ENCODE measurements at regions of chr9 and their contacts with region 1.

Region 1: DNA sequence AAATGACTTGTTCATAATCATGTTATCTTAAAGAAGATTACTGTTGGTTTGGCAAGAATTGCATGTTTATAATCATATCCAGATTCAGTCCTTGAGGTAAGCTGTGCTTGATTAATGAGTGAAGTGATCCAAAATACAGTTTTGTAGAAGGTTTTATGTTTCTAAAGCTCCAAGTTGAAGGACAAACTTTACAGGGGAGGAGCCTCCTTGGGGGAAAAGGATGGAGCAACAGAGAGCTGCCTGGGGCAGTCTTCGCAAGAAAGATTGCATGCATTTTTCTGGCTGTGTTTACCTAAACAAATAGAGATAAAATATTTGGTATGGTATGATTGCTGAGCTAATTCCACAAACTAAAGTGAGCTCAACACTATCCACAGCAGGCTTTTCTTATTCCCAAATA is 189.5 kb upstream of the TYRP1 start:
- DNase-seq: no peak
- ATAC-seq: no peak
- H3K4me3 ChIP-seq: no peak overlapping the region
- H3K27ac ChIP-seq: no peak overlapping the region
- H3K4me1 ChIP-seq: no peaks in the 10 kb centered on the region
- H3K27me3 ChIP-seq: no peaks in the 10 kb centered on the region
- CTCF ChIP-seq: no peak

Region 2: DNA sequence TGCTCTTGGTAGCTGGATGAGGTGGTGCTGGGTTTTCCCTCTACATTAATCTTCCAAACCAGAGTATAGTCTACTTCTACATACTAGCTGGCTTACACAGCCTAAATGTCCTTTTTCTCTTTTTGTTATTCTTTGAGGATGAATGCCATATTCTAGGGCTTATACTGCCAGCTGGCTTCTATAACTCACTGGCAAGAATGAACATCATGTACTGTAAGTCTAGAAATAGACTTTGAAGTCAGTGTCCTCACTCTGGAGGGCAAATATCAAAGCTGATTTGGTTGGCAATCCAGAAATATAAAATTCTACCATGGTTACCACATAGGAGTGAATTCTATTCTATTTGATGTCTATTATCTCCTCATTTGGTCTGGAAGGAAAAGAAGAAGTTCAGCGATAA is 62.2 kb before region 1 on chr9:
- intact Hi-C with region 1: loop called in 1 of 10 experiments (anchors 10 kb)
- DNase-seq: no peak
- ATAC-seq: peak in 4 of 8 donors; percentile 65 to 88 (median 78)
- H3K4me3 ChIP-seq: no peak overlapping the region
- H3K27ac ChIP-seq: no peak overlapping the region
- H3K4me1 ChIP-seq: peaks cover 0 to 6% (median 0%) of the 10 kb centered on the region in 9 donors
- H3K27me3 ChIP-seq: no peaks in the 10 kb centered on the region
- CTCF ChIP-seq: no peak

Region 3: DNA sequence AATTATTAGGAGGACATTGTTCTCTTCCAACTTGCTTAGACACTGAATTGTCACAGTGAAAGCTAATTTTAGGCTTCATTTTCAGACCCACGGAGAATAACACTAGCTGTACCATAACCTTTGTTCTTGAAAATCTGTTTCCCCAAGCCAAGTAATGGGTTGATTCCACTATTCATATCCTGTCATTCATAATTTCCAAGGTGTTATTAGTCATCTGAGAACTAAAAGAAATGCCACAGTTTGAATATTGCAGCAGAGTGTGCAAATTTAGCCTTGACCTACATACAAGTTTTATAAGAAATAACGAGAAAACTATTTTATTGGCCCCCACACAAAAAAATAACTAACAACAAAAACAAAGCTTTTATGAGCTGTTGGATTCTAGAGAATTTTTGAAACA is 41.0 kb after region 1 on chr9:
- intact Hi-C with region 1: no loop called
- DNase-seq: no peak
- ATAC-seq: no peak
- H3K4me3 ChIP-seq: no peak overlapping the region
- H3K27ac ChIP-seq: no peak overlapping the region
- H3K4me1 ChIP-seq: no peaks in the 10 kb centered on the region
- H3K27me3 ChIP-seq: no peaks in the 10 kb centered on the region
- CTCF ChIP-seq: no peak

Region 4: DNA sequence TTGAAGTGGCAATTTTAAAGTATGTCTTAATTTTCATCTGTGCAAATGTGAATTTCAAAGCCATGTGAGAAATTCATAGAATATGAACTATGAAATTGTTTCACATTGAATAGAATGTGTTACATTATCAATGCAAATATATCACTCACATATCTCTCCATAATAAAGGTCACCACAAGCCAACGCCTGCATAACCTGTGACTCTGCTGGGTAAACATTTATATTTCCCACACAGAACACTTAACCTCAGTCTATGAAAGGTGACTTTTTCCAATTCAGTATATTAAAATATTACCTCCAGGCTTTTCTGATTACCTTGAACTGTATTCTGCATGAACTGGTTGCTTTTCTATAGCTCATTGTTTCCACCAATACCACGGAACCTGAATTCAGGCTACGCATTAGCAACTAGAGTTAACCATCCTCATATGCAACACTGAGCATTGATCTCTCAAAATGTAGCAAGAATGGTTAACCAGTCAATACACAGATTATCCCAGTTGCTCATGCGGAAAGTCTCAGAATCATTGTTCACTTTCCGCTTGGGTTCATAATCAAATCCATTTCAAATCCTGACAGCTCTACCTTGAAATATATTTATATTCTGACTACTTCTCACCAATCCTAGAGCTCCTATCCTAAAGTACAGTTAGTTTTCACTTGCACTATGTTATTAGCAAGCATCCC is 62.9 kb after region 1 on chr9:
- intact Hi-C with region 1: loop called in 1 of 10 experiments (anchors 10 kb)
- DNase-seq: no peak
- ATAC-seq: no peak
- H3K4me3 ChIP-seq: no peak overlapping the region
- H3K27ac ChIP-seq: no peak overlapping the region
- H3K4me1 ChIP-seq: no peaks in the 10 kb centered on the region
- H3K27me3 ChIP-seq: no peaks in the 10 kb centered on the region
- CTCF ChIP-seq: no peak